ENCODE measurements at regions of chr12 and their contacts with region 1.

Region 1: DNA sequence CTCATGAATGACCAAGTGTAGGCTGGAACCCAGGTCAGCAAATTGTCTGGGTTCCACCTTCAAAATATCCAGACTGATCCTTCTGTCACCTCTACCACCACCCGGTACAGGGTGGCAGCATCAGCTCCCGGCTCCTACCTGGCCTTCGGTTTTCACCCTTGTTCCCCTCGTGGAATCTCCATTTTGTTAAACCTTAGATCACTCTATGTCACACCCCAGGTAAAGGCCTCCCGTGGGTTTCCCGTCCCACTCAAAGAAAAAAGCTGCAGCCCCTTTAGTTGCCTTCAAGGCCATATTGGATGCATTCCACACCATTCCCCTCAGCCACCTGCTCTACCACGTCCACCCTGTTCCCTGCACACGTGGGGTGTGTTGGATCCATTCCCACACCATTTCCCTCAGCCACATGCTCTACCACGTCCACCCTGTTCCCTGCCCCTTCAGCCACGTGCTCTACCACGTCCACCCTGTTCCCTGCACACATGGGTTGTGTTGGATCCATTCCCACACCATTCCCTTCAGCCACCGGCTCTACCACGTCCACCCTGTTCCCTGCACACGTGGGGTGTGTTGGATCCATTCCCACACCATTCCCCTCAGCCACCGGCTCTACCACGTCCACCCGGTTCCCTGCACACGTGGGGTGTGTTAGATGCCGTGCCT is 23.8 kb downstream of the SLC6A13 start:
- DNase-seq: no peak
- ATAC-seq: no peak
- H3K4me3 ChIP-seq: no peak overlapping the region
- H3K27ac ChIP-seq: no peak overlapping the region
- H3K4me1 ChIP-seq: no peaks in the 10 kb centered on the region
- H3K27me3 ChIP-seq: no peaks in the 10 kb centered on the region
- CTCF ChIP-seq: no peak

Region 2: DNA sequence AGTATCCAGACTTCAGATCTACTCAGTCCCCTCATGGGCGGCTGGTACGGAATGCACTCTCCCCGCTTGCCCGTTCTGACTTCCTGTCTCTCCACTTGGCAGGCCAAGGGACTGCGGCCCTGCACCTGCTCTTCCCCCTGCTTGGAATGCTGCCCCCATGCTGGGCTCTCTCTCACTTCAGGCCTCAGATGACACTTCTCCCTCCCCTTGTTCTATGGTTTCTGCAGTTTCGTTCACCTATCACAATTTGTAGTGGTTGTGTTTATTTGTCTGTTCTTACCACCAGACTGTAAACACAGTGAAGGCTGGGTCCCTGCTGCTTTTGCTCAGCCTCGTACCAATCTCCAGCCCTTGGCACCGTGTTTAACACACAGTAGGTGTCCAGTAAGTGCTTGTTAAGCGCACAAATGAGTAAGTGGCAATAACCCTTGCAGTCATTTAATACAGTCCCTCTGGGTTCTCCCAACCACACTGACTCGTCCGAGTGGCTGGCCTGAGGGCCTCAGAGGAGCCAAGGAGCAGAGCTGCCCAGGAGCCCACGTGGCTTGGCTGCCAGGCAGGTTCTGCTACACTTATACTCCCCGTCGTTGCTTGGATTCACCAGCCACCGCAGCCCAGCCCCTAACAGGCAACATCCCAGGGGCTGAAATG is 36.7 kb before region 1 on chr12:
- intact Hi-C with region 1: no loop called
- DNase-seq: no peak
- ATAC-seq: peak in 3 of 8 donors; percentile 31 to 63 (median 31)
- H3K4me3 ChIP-seq: no peak overlapping the region
- H3K27ac ChIP-seq: no peak overlapping the region
- H3K4me1 ChIP-seq: peaks cover 0 to 8% (median 7%) of the 10 kb centered on the region in 9 donors
- H3K27me3 ChIP-seq: peaks cover 0 to 40% (median 9%) of the 10 kb centered on the region in 7 donors
- CTCF ChIP-seq: no peak

Region 3: DNA sequence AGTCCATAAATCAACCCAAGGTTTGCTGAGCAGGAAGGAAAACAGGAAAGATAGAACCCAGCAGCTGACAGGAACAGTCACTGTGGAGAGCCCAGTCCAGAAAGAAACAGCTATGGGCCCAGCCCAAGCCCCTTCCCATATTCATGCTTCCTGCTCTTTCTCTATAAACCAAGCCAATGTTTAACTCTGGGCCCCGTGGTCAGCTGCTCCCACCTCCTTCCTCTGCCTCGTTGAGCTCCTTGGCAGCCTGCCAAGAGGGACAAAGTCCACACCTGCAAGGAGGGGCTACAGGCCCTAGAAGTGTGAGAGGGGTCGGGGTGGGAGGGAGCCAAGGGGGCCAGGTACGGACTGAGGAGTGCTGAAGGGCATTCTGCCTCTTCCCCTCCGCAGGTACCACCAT is 13.8 kb after region 1 on chr12:
- intact Hi-C with region 1: loop called in 1 of 10 experiments (anchors 2 kb)
- DNase-seq: no peak
- ATAC-seq: no peak
- H3K4me3 ChIP-seq: no peak overlapping the region
- H3K27ac ChIP-seq: no peak overlapping the region
- H3K4me1 ChIP-seq: no peaks in the 10 kb centered on the region
- H3K27me3 ChIP-seq: peaks cover 0 to 10% (median 0%) of the 10 kb centered on the region in 7 donors
- CTCF ChIP-seq: no peak

Measured in heart right ventricle (tissue), 16 donors.